Posterior vena cava (tissue), 2 donors: ENCODE measurements at regions of chr2 and their contacts with region 1.

Region 1: DNA sequence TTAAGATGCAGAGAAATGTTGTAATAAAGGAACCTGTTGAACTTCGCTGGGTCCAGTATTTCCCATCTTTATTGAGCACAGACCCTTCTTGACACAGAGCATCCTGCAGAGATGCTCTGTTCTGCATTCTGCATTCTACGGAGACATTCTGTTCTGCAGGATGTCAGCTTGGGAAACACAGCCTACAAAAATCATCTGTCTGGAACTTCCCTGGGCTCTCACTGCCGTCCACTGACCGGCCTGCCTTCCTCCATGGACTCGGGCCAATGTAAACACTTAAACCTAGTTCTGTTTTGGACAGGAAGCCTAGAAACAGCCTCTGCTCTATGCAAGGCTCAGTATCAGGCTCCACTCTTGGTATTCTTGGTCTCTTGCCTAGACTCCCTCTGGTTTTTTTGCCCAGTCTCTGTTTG is 90.0 kb upstream of the PPP1CB start:
- DNase-seq: no peak

Region 2: GRCh38 chr2:28325567-28326468 is 335.8 kb before region 1 on chr2:
- intact Hi-C with region 1: no loop called
- DNase-seq: no peak

Region 3: DNA sequence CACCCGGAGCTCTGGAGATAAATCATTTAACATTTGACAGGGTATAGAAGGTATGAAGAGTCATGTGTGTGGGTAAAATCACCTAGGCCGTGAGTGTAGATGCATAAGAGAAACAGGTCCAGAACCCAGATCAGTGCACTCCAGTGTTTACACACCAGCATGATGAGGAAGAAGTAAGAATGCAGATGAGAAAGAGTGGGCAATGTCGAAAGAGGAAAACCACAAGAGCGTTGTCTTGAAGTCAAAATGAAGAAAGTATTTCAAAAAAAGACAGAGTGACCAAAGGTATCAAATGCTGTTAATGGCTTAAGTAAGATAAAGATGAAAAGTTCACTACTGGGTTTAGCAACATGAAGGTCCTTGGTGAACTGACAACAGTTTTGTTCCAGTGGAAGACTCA is 197.7 kb before region 1 on chr2:
- intact Hi-C with region 1: no loop called
- DNase-seq: no peak

Region 4: DNA sequence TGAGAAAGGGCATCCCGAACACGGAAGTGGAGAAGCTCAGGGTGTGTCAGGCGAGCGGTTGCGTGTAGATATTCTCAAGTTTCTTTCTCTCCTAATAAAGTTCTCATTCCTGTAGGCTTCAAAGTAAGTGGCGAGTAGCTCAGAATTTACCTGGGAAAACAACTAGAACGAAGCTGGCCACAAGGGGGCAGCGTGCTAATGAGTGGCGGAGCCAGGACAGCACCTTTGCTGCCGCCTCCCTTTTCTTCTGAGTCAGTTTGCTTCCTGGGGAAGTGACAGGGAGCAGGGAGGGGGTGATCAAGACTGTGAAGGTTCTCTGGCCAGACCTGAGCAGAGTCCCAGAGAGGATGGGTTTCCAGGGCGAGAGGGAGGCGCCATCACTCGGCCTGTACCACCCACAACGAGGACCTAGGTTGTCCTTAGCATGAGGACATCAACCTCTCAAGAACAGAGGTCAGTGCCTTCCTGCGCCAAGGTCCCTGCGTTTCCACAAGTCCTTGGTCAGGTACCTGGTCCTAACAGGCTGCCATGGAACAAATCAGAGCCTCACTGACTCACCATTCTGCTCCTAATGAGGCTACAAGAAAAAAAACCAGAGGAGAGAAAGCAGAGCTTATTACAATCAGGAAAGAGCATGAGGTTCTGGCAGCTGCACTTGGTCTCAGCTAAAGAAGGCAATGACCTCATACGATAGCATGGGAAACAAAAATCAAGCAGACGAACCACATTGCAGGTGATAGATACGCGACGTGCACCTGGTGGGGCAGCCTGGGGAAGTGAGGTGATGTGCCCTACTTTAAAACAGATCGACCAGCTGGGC is 67.1 kb before region 1 on chr2:
- intact Hi-C with region 1: loop called in 1 of 2 experiments (anchors 10 kb)
- DNase-seq: peak; percentile 94

Region 5: GRCh38 chr2:28695245-28695647 is 33.7 kb after region 1 on chr2:
- intact Hi-C with region 1: loop called in 1 of 2 experiments (anchors 2 kb)
- DNase-seq: no peak

Region 6: GRCh38 chr2:28713577-28714298 is 52.1 kb after region 1 on chr2:
- intact Hi-C with region 1: no loop called
- DNase-seq: no peak

Region 7: DNA sequence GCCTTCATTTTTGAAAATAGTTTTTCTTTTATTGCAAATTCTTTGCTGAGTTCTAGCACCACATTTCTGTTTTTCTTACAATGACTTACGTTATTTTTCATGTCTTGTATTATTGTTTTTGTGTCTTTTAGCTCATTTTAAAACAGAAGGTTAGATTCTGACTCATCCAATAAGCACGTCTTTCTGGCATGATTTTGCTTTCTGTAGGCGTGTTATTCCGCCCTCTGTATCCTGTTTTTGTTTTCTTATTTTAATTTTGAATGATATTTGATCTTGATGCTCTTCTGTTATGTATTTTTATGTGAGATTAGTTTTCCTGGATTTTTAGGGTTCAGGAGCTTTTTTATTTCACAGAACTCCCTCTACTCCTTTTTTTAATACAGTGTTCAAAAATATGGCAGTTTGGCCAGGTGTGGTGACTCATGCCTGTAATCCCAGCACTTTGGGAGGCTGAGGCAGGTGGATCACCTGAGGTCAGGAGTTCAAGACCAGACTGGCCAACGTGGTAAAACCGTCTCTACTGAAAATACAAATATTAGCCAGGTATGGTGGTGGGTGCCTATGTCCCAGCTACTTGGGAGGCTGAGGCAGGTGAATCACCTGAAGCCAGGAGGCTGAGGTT is 598.7 kb after region 1 on chr2:
- intact Hi-C with region 1: no loop called
- DNase-seq: no peak